ENCODE measurements at regions of chr17 and their contacts with region 1.

Region 1: DNA sequence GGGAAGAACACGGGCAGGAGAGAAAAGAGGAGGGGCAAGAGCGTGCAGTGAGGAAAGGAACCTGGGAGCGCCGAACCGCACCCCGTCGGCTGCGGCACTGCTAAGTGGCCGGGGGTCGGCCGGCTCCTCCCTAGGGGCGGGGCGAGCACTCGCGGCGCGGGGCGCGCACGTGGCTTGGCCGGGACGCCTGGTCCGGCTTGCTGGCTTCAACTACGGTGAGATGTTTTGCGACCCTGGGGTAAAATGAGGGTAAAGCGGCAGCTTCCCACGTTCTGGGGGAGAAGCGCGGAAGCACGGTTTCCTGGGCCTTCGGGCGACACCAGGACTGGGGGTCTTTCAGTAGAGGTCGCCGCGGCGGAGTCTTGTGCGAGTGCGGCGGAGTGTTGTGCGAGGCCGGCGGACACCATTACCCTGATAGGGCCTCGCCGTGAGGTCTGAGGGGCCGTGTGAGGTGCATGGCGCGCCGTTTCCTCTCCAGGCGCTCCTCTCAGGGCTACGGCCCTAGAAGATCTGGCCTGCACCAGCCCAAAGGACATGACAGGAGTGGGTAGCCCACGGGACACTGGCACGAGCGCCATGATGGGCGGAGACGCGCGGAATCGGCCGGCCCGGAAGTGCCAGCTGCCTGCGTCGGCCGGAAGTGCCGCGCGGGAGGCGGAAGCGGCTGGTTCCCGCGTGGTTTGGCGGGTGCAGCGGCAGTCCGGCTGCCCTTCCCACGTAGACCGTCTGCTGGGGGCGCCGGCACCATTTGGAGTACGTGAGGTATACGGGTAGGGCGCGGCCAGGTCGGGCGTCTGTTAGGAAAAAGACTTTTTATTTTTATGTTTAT is at the starts of genes MYO19 and PIGW:
- DNase-seq: peak; percentile 81 to 87 (median 85)
- H3K4me3 ChIP-seq: peak within 1 kb of the TSS; percentile 58 to 99
- H3K4me3 Mint-ChIP-seq: peak within 1 kb of the TSS; percentile 90 to 97 (median 95)
- H3K27ac ChIP-seq: peak within 1 kb of the TSS; percentile 82
- H3K27ac Mint-ChIP-seq: peak within 1 kb of the TSS; percentile 91 to 97 (median 96)
- H3K4me1 ChIP-seq: peaks cover 12% of the 10 kb centered on the region
- H3K4me1 Mint-ChIP-seq: peaks cover 9 to 27% (median 19%) of the 10 kb centered on the region in 4 donors
- H3K27me3 ChIP-seq: no peaks in the 10 kb centered on the region
- H3K27me3 Mint-ChIP-seq: no peaks in the 10 kb centered on the region
- total RNA-seq, gene MYO19: 79.2 to 85.8 TPM
- total RNA-seq, gene PIGW: 4.7 to 5.1 TPM

Region 2: GRCh38 chr17:36486204-36487194 is 48.6 kb before region 1 on chr17 and contains the start of gene ZNHIT3:
- CTCF ChIA-PET with region 1: interaction called, 3 read pairs
- POLR2A ChIA-PET with region 1: interaction called, 19 read pairs
- intact Hi-C with region 1: loop called (anchors 1 kb)
- DNase-seq: peak; percentile 91 to 95 (median 91)
- H3K4me3 ChIP-seq: peak within 1 kb of the TSS; percentile 72 to 91
- H3K4me3 Mint-ChIP-seq: peak within 1 kb of the TSS; percentile 97 to 100 (median 99)
- H3K27ac ChIP-seq: peak within 1 kb of the TSS; percentile 70
- H3K27ac Mint-ChIP-seq: peak within 1 kb of the TSS; percentile 85 to 100 (median 99)
- H3K4me1 ChIP-seq: peaks cover 65% of the 10 kb centered on the region
- H3K4me1 Mint-ChIP-seq: peaks cover 28 to 82% (median 46%) of the 10 kb centered on the region in 4 donors
- H3K27me3 ChIP-seq: peaks cover 10% of the 10 kb centered on the region
- H3K27me3 Mint-ChIP-seq: peaks cover 9% of the 10 kb centered on the region in 2 donors
- total RNA-seq, gene ZNHIT3: 66.6 to 68.3 TPM

Region 3: DNA sequence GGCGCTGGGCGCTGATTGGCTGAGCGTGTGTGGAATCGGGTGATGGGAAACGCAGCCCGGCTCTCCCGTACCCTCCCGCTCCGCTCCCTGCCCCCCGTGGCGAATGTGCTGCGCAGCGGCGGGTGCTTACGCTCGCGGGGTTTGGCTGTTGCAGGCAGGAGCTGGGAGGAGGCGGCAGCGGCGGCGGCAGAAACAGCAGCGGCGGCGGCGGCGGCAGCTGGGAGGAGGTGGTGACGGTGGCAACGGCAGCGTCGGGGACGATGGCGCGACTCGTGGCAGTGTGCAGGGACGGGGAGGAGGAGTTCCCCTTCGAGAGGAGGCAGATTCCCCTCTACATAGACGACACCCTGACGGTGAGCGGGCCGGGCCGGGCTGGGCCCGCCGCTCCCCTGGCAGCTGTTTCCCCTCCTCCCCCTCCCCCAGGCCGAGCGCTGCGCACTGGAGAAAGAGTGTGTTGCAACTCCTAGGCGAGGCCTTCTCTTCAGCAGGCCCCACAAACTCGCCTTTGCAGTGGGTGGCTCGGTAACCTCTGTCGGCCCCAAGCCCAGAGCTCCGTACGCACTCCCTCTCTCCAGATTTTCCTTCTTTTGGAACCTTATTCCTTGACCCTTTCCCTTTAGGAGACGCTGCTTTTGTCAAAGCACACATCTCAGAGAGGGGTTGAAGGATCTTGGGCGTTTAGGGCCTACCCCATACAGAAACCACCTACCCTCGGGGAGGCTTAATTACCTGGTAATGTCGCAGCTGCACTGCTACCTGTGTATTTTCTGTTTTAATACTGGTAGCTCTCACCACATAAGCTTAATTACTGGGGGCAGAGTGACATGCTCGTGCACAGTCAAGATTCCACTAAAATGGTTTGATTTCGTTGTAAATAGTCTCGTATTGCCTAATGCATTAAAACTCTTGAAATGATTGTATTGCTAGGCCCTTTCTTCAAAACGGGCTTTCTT is 10.7 kb after region 1 on chr17:
- CTCF ChIA-PET with region 1: interaction called, 24 read pairs
- POLR2A ChIA-PET with region 1: interaction called, 151 read pairs
- intact Hi-C with region 1: loop called (anchors 1 kb)
- DNase-seq: peak; percentile 97 to 99 (median 98)
- H3K4me3 ChIP-seq: peak overlapping the region; percentile 89 to 90
- H3K4me3 Mint-ChIP-seq: peak overlapping the region; percentile 88 to 97 (median 92)
- H3K27ac ChIP-seq: peak overlapping the region; percentile 82
- H3K27ac Mint-ChIP-seq: peak overlapping the region; percentile 92 to 98 (median 96)
- H3K4me1 ChIP-seq: peaks cover 59% of the 10 kb centered on the region
- H3K4me1 Mint-ChIP-seq: peaks cover 25 to 64% (median 40%) of the 10 kb centered on the region in 4 donors
- H3K27me3 ChIP-seq: no peaks in the 10 kb centered on the region
- H3K27me3 Mint-ChIP-seq: no peaks in the 10 kb centered on the region

Region 4: DNA sequence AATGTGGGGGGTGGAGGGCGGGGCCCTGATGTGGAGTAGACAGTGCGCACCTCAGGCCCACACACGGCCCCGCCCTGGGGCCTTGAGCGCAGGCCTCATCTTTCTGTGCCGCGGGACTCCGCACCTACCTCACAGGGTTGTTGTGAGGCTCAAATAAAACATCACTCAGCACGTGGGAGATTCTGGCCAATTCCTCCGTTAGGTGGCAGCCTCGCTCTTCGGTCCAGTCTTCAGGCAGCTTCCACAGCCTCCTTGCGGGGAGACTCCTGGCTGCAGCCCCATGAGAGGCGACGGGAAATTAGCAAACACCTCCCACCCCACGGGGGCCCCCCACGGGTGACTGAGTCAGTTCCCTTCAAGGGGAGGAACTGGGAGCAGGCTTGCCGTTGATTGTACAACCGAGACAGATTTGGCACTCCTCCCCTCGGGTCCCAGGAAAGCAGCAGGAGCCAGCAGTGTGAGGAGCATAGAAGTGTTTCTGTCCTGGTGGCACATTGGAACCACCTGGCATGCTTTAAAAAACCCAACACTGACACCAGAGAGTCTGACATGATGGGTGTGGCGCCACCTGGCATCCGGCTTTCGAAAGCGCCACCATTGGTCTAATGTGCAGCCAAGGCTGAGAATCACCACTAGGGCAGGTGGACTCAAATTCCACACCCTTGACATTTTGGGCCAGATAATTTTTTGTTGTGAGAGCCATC is 73.9 kb after region 1 on chr17:
- CTCF ChIA-PET with region 1: no interaction called
- POLR2A ChIA-PET with region 1: no interaction called
- intact Hi-C with region 1: no loop called
- DNase-seq: no peak
- H3K4me3 ChIP-seq: no peak overlapping the region
- H3K4me3 Mint-ChIP-seq: no peak overlapping the region
- H3K27ac ChIP-seq: no peak overlapping the region
- H3K27ac Mint-ChIP-seq: peak overlapping the region in 2 of 7 donors; percentile 57 to 69
- H3K4me1 ChIP-seq: peaks cover 15% of the 10 kb centered on the region
- H3K4me1 Mint-ChIP-seq: peaks cover 14 to 37% (median 22%) of the 10 kb centered on the region in 4 donors
- H3K27me3 ChIP-seq: no peaks in the 10 kb centered on the region
- H3K27me3 Mint-ChIP-seq: no peaks in the 10 kb centered on the region

Region 5: GRCh38 chr17:36722121-36722902 is 187.3 kb after region 1 on chr17:
- CTCF ChIA-PET with region 1: no interaction called
- POLR2A ChIA-PET with region 1: interaction called, 3 read pairs
- intact Hi-C with region 1: loop called (anchors 10 kb)
- DNase-seq: peak; percentile 76 to 79 (median 79)
- H3K4me3 ChIP-seq: peak overlapping the region in 1 of 2 donors; percentile 69
- H3K4me3 Mint-ChIP-seq: peak overlapping the region; percentile 80 to 87 (median 86)
- H3K27ac ChIP-seq: peak overlapping the region; percentile 68
- H3K27ac Mint-ChIP-seq: peak overlapping the region; percentile 91 to 98 (median 95)
- H3K4me1 ChIP-seq: peaks cover 50% of the 10 kb centered on the region
- H3K4me1 Mint-ChIP-seq: peaks cover 33 to 68% (median 56%) of the 10 kb centered on the region in 4 donors
- H3K27me3 ChIP-seq: no peaks in the 10 kb centered on the region
- H3K27me3 Mint-ChIP-seq: no peaks in the 10 kb centered on the region

Measured in CD4-positive, alpha-beta memory T cell (primary cell).